ENCODE measurements at regions of chr17 and their contacts with region 1.

Region 1: GRCh38 chr17:36629252-36629847 is 28.0 kb downstream of the MRM1 start:
- DNase-seq: peak; percentile 68 to 90 (median 80)
- H3K4me3 ChIP-seq: no peak overlapping the region
- H3K27ac ChIP-seq: no peak overlapping the region
- H3K27me3 ChIP-seq: no peaks in the 10 kb centered on the region
- CTCF ChIP-seq: peak; percentile 83 to 100 (median 99)

Region 2: GRCh38 chr17:36667922-36668321 is 38.6 kb after region 1 on chr17:
- intact Hi-C with region 1: loop called in 1 of 2 experiments (anchors 2 kb)
- DNase-seq: no peak
- H3K4me3 ChIP-seq: no peak overlapping the region
- H3K27ac ChIP-seq: no peak overlapping the region
- H3K27me3 ChIP-seq: no peaks in the 10 kb centered on the region
- CTCF ChIP-seq: no peak

Region 3: DNA sequence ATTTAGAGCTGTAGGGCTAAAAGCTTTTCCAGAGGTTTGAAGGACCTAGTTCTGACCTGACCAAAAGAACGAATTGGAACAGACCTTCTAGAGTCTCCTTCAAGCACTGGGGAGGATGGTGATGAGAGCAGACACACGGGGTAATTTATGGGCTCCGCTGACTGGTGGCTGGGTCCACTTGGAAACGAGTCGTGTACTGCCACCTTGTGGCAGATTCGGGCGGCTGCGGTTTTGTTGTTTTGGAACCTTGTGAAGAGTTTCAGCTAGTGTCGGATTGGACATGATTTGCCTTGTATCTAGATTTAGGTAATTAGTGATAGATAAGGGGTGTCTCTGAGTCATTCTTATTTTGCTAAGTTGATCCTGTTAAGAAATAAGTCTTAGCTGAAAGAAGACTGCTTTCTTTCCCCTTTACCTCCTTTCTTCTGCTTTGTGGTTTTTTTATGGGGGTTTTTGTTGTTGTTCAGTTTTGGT is 418.3 kb after region 1 on chr17:
- intact Hi-C with region 1: loop called in 1 of 2 experiments (anchors 5 kb)
- DNase-seq: peak; percentile 81 to 96 (median 88)
- H3K4me3 ChIP-seq: no peak overlapping the region
- H3K27ac ChIP-seq: peak overlapping the region in 2 of 59 donors; percentile 9 to 69
- H3K27me3 ChIP-seq: no peaks in the 10 kb centered on the region
- CTCF ChIP-seq: peak; percentile 83 to 98 (median 91)

Region 4: DNA sequence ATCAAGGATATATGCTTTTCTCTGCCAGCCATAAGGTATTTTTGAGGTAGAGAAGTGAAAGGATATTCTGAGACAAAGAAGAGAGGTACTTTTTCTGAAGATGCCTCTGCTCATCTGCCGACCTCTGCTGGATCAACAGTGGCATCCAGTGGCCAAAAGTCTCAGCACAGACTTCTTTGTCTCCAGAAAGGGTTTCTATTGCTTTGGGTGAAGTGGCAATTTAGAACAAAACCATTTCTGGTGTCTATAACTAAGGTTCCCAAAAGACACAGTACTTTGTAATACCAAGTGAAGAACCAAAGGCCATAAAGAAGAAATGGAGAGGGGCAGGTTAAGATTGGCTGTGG is 591.2 kb after region 1 on chr17:
- intact Hi-C with region 1: loop called in 1 of 2 experiments (anchors 5 kb)
- DNase-seq: peak; percentile 7 to 61 (median 48)
- H3K4me3 ChIP-seq: no peak overlapping the region
- H3K27ac ChIP-seq: peak overlapping the region in 11 of 59 donors; percentile 2 to 46 (median 35)
- H3K27me3 ChIP-seq: no peaks in the 10 kb centered on the region
- CTCF ChIP-seq: peak in 54 of 56 donors; percentile 19 to 78 (median 57)

Region 5: DNA sequence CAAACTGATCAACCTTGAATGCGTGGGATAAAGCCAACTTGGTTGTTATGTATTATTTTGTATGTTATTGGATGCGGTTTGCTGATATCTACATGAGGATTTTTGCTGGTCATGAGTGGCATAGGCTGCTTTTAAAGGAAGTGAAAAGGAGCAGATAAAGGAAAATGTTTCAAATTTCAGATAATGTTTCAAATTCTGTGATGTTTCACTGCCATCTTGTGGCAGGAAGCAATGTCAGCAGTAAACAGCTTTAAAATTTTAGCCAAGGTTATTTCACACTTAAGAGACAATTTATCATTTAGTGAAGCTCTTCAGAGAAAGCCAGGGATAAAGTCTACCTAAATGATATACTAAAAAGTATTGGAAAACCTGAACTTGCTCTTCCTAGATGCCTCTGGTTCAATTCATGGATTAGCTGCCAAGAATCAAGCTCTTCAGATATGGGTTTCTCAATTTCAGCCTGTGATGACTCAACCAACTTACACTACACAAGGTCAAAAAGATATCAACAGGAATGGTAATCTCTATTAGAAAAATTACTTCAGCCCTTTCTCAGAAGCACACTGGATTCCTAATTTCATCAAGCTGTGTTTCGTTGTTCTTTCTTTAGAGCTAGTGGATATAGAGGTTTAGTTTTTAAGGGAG is 610.5 kb after region 1 on chr17:
- intact Hi-C with region 1: loop called (anchors 5 kb)
- DNase-seq: no peak
- H3K4me3 ChIP-seq: no peak overlapping the region
- H3K27ac ChIP-seq: peak overlapping the region in 7 of 59 donors; percentile 2 to 35 (median 19)
- H3K27me3 ChIP-seq: no peaks in the 10 kb centered on the region
- CTCF ChIP-seq: peak; percentile 46 to 84 (median 72)

Region 6: DNA sequence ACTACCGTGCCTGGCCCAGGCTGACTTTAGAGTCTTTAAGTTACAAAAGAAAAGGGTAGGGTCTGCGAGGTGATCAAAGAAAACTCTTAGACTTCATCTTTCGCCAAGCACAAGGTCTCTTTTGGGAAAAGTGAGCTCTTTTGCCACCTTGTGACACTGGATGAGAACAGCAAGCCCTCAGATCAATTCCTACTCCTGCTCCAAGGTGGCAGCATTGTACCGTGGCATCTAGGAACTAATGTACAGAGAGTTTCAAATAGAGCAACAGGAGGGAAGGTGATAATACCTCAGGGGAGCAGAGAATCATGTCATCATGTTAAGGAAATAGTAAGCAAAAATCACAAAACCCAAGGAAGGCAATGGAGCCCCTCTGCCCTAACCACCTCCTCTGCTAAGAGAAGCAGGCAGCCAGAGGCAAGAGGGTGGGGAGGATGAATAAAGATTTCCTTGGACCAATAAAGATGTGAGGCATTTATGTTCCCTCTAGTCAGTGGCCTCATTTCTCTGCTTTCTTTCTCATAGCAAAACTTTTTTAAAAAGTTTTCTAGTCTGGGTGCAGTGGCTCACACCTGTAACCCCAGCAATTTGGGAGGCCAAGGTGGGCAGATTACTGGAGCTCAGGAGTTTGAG is 744.3 kb after region 1 on chr17:
- intact Hi-C with region 1: loop called in 1 of 2 experiments (anchors 10 kb)
- DNase-seq: peak in 8 of 10 donors; percentile 42 to 75 (median 56)
- H3K4me3 ChIP-seq: peak overlapping the region in 1 of 59 donors; percentile 9
- H3K27ac ChIP-seq: no peak overlapping the region
- H3K27me3 ChIP-seq: no peaks in the 10 kb centered on the region
- CTCF ChIP-seq: peak; percentile 20 to 97 (median 90)

Measured in dorsolateral prefrontal cortex (tissue), 120 donors.